Activated T-helper 1 cell treated with anti-CD3 and anti-CD28 coated beads, Interleukin-12 subunit alpha, Interleukin-12 subunit beta, Interleukin-2, Interleukin-4 antibody, amounts not matched to agents 30 ng/mL and 10 ng/mL and 1 ng/mL, durations not matched to agents 14 hours and 24 hours and 36 hours (primary cell): ENCODE measurements at regions of chr1 and their contacts with region 1.

Region 1: DNA sequence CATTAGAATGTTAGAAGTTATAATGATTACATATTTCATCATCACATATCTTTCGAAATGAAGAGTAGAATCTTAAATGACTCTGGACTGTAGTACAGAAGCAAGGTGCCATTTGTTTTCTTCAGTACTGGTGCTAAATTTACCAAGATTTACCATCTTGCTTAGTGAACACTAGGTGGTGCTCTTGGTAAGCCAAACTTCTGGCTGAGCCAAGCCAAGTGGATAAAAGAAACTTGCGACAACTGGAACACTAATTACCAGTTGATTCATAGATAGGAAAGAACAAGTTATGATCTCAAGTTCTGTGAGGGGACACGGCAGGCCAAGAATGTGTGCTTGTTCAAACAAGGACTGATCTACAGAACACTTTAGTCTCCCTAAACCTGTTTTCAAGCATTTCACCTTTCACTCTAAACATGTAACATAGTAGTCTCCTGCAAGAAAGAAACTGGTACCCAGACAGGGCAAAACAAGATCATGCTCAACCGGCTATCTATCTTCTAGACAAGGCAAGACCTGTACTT is 19.8 kb downstream of the SPRTN start:
- DNase-seq: no peak
- H3K4me3 Mint-ChIP-seq: no peak overlapping the region
- H3K27ac Mint-ChIP-seq: no peak overlapping the region
- H3K4me1 Mint-ChIP-seq: peaks cover 13% of the 10 kb centered on the region
- H3K27me3 Mint-ChIP-seq: no peaks in the 10 kb centered on the region

Region 2: GRCh38 chr1:230350208-230350921 is 1007.5 kb before region 1 on chr1:
- intact Hi-C with region 1: no loop called
- DNase-seq: no peak
- H3K4me3 Mint-ChIP-seq: no peak overlapping the region
- H3K27ac Mint-ChIP-seq: no peak overlapping the region
- H3K4me1 Mint-ChIP-seq: no peaks in the 10 kb centered on the region
- H3K27me3 Mint-ChIP-seq: peaks cover 2% of the 10 kb centered on the region

Region 3: DNA sequence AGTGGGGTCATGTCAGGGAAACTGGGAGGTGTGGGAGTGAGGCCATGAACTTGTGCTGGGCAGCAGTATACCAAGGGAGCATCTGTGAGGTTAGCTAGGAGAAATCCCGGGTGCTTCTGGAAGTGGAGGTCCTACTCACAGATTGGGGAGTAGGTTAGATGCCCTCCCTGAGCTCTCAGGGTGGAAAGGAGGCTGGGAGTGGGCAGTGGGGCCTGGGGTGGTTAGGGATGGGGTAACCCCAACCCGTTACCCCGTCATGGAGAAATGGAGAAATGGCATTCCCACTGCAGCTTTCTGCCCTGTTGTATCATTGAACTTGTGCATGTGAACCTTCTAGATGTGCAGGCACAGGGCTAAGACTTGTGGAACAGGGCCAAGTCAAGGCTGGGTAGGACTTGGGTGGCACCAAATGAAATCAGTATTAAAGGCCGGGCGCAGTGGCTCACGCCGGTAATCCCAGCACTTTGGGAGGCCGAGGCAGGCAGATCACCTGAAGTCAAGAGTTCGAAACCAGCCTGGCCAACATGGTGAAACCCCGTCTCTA is 47.4 kb before region 1 on chr1:
- intact Hi-C with region 1: no loop called
- DNase-seq: no peak
- H3K4me3 Mint-ChIP-seq: no peak overlapping the region
- H3K27ac Mint-ChIP-seq: no peak overlapping the region
- H3K4me1 Mint-ChIP-seq: no peaks in the 10 kb centered on the region
- H3K27me3 Mint-ChIP-seq: no peaks in the 10 kb centered on the region

Region 4: GRCh38 chr1:231478800-231479199 is 120.9 kb after region 1 on chr1:
- intact Hi-C with region 1: no loop called
- DNase-seq: no peak
- H3K4me3 Mint-ChIP-seq: no peak overlapping the region
- H3K27ac Mint-ChIP-seq: no peak overlapping the region
- H3K4me1 Mint-ChIP-seq: no peaks in the 10 kb centered on the region
- H3K27me3 Mint-ChIP-seq: peaks cover 35% of the 10 kb centered on the region

Region 5: GRCh38 chr1:231550448-231550781 is 192.5 kb after region 1 on chr1:
- intact Hi-C with region 1: loop called (anchors 1 kb)
- DNase-seq: no peak
- H3K4me3 Mint-ChIP-seq: no peak overlapping the region
- H3K27ac Mint-ChIP-seq: no peak overlapping the region
- H3K4me1 Mint-ChIP-seq: peaks cover 13% of the 10 kb centered on the region
- H3K27me3 Mint-ChIP-seq: peaks cover 2% of the 10 kb centered on the region

Region 6: GRCh38 chr1:231592809-231593208 is 234.9 kb after region 1 on chr1:
- intact Hi-C with region 1: loop called (anchors 1 kb)
- DNase-seq: no peak
- H3K4me3 Mint-ChIP-seq: no peak overlapping the region
- H3K27ac Mint-ChIP-seq: no peak overlapping the region
- H3K4me1 Mint-ChIP-seq: peaks cover 22% of the 10 kb centered on the region
- H3K27me3 Mint-ChIP-seq: peaks cover 6% of the 10 kb centered on the region

Region 7: GRCh38 chr1:231727171-231727570 is 369.3 kb after region 1 on chr1:
- intact Hi-C with region 1: loop called (anchors 2 kb)
- DNase-seq: no peak
- H3K4me3 Mint-ChIP-seq: no peak overlapping the region
- H3K27ac Mint-ChIP-seq: no peak overlapping the region
- H3K4me1 Mint-ChIP-seq: no peaks in the 10 kb centered on the region
- H3K27me3 Mint-ChIP-seq: no peaks in the 10 kb centered on the region